ENCODE measurements at regions of chr12 and their contacts with region 1.

Region 1: DNA sequence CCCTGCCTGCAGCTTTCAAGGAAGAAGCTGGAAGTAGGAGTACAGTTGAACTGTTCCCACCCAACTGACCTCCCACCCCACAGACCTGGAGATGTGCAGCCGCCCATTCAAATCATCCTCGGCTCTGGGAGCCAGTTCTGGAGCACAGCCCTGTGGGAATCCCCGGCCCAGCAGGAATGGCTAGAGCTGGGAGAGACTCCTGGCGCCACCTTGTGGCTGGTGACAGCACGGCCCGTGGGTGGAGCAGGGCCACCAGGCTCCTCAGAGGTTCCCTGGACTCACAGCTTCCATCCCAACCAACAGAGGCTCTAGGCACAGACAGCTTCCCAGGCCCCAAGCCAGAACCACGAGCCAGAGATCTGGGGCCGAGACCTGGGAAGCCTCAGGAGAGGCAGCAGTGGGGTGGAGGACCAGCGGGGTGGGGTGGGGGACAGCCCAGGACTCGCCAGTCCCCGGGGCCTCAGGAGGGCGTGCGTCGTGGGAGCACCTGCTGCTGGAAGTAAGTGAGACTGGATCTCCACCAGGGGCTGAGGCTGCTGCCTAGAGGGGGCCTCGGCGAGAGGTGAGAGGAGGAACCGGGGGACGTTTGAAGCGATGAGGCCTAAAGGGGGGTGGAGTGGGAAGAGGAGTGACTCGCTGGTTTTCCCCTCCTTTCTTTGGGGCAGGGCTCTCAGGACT is 43.4 kb downstream of the RNF34 start:
- DNase-seq: peak; percentile 70
- ATAC-seq: peak; percentile 77
- H3K4me3 Mint-ChIP-seq: no peak overlapping the region
- H3K27ac Mint-ChIP-seq: peak overlapping the region; percentile 52
- H3K4me1 Mint-ChIP-seq: no peaks in the 10 kb centered on the region
- H3K27me3 Mint-ChIP-seq: no peaks in the 10 kb centered on the region

Region 2: GRCh38 chr12:121326996-121327674 is 116.2 kb before region 1 on chr12:
- CTCF ChIA-PET with region 1: interaction called, 10 read pairs
- DNase-seq: no peak
- ATAC-seq: no peak
- H3K4me3 Mint-ChIP-seq: no peak overlapping the region
- H3K27ac Mint-ChIP-seq: no peak overlapping the region
- H3K4me1 Mint-ChIP-seq: no peaks in the 10 kb centered on the region
- H3K27me3 Mint-ChIP-seq: no peaks in the 10 kb centered on the region

Region 3: DNA sequence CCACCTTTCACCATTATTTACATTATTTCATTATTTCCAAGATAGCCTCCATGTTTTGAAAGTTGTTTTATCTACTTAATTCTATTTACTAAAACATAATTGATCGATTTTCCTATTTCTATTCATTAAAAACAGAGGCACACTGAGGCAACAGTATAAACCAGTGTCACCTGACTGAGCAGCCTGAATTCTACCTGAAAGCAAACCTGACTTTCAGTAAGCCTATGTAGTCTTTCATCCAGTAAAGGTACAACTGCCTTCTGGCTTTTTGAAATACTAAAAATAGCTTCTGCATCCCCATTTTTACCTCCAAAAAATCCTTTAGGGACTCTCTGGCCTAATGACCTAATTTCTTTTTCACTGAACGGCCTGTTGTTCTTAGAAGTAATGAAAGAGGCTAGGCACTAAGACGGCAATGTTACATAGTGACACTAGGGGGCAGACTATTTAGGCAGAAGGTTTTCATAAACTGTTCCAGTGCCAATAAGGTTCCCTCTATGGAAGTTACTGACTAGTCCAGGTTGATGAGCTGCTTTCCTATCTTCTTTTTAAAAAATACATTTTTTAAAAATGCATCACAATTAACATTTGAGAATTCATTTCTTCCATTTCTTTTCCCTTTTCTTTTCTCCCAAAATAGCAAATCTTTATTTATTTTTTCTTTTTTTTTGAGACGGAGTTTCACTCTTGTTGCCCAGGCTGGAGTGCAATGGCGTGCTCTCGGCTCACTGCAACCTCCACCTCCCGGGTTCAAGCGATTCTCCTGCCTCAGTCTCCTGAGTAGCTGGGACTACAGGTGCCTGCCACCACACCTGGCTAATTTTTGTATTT is 108.6 kb before region 1 on chr12:
- CTCF ChIA-PET with region 1: interaction called, 41 read pairs
- DNase-seq: no peak
- ATAC-seq: peak; percentile 78
- H3K4me3 Mint-ChIP-seq: no peak overlapping the region
- H3K27ac Mint-ChIP-seq: no peak overlapping the region
- H3K4me1 Mint-ChIP-seq: peaks cover 3% of the 10 kb centered on the region
- H3K27me3 Mint-ChIP-seq: no peaks in the 10 kb centered on the region

Region 4: DNA sequence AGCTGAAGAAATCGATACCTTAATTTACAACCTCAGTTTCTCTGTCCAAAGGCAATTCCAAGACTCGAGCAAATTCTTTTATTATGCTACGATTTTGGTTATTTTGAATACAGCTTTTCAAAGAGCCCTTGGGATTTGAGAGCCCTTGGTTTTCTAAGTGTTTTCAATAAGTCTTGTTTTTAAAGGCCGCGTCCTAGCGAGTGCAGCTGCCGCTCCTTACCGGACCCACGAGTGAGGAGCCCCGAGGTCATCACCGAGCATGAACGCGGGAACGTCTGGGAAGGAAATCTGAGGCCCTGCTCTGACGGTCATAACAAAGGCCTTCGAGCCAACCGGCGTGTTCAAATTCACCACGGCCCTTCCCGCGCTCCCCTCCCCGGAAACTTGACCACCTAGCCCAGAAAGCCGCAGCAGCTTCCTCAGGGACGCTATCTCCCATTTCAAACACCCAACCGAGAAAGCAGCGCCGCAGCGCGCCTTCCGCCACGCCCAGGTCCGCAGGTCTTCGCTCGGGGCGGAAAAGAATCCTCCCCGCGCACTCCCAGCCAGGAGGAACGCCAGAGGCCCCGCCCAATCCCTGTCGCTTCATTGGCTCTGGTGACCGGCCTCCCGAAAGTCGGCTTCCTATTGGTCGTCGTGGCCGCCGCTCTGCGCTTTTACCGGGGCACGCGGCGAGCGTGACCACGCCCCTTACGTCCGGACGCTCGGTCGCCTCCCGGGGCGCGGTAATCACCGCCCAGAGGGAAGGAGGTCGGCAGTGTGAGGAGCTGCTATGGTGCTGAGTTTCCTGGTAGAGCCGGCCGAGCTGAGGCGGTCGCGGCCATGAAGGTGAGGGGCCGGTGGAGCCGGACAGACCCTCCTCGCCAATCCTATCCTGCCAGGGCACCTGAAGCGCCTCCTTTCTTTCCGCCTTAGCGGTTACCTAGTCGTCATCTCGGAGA is 43.7 kb before region 1 on chr12 and contains the start of gene RNF34:
- CTCF ChIA-PET with region 1: interaction called, 12 read pairs
- DNase-seq: peak; percentile 99
- ATAC-seq: peak; percentile 93
- H3K4me3 Mint-ChIP-seq: peak within 1 kb of the TSS; percentile 89
- H3K27ac Mint-ChIP-seq: peak within 1 kb of the TSS; percentile 95
- H3K4me1 Mint-ChIP-seq: peaks cover 36% of the 10 kb centered on the region
- H3K27me3 Mint-ChIP-seq: no peaks in the 10 kb centered on the region
- total RNA-seq, gene RNF34: 96.1 to 102 TPM

Region 5: GRCh38 chr12:121432740-121433480 is 10.4 kb before region 1 on chr12:
- CTCF ChIA-PET with region 1: interaction called, 11 read pairs
- DNase-seq: no peak
- ATAC-seq: peak; percentile 9
- H3K4me3 Mint-ChIP-seq: no peak overlapping the region
- H3K27ac Mint-ChIP-seq: peak overlapping the region; percentile 57
- H3K4me1 Mint-ChIP-seq: peaks cover 11% of the 10 kb centered on the region
- H3K27me3 Mint-ChIP-seq: no peaks in the 10 kb centered on the region

Region 6: GRCh38 chr12:121461048-121461447 is 17.7 kb after region 1 on chr12:
- CTCF ChIA-PET with region 1: interaction called, 14 read pairs
- DNase-seq: no peak
- ATAC-seq: no peak
- H3K4me3 Mint-ChIP-seq: no peak overlapping the region
- H3K27ac Mint-ChIP-seq: no peak overlapping the region
- H3K4me1 Mint-ChIP-seq: peaks cover 46% of the 10 kb centered on the region
- H3K27me3 Mint-ChIP-seq: no peaks in the 10 kb centered on the region

Region 7: DNA sequence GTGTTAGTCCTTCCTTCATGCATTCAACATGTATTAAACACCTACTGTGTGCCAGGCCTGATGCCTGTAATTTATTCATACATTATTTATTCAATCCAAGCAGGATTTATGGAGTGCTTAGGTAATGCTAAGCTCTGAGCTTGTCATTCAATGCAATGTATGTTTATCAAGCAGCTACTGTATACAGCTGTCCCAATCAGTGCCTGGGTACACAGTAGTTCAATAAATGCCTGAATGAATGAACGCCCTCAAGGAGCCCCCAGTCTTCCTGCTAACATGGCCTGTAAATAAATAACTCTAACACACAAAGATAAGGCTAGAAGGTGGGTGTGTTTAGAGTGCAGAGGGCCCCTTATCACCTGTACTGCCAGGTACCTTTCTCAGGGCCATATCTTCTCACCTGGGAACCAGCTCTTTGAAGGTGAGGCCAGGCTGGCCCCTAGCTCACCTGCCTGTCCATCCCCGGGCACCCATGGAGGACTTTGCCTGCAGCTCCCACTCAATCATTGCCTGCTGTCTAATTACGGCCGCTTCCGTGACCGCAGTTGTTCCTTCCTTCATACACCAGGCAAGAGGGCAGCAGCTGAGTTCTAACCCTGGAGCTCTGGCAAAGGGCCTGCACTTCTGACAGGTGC is 157.5 kb after region 1 on chr12:
- CTCF ChIA-PET with region 1: no interaction called
- DNase-seq: no peak
- ATAC-seq: no peak
- H3K4me3 Mint-ChIP-seq: no peak overlapping the region
- H3K27ac Mint-ChIP-seq: no peak overlapping the region
- H3K4me1 Mint-ChIP-seq: no peaks in the 10 kb centered on the region
- H3K27me3 Mint-ChIP-seq: no peaks in the 10 kb centered on the region